ENCODE measurements at regions of chr10 and their contacts with region 1.

Region 1: GRCh38 chr10:103238506-103239252 is 7.0 kb upstream of the RPEL1 start:
- DNase-seq: peak in 1 of 2 experiments; percentile 39
- H3K4me3 ChIP-seq: no peak overlapping the region
- H3K27ac ChIP-seq: no peak overlapping the region
- H3K4me1 ChIP-seq: peaks cover 2 to 8% (median 6%) of the 10 kb centered on the region in 4 experiments; a peak in 6 of 7 replicates
- H3K27me3 ChIP-seq: no peaks in the 10 kb centered on the region
- CTCF ChIP-seq: peak; percentile 54 to 78 (median 65)
- EP300 ChIP-seq: no peak
- POLR2A ChIP-seq: no peak
- RAD21 ChIP-seq: peak; percentile 86

Region 2: DNA sequence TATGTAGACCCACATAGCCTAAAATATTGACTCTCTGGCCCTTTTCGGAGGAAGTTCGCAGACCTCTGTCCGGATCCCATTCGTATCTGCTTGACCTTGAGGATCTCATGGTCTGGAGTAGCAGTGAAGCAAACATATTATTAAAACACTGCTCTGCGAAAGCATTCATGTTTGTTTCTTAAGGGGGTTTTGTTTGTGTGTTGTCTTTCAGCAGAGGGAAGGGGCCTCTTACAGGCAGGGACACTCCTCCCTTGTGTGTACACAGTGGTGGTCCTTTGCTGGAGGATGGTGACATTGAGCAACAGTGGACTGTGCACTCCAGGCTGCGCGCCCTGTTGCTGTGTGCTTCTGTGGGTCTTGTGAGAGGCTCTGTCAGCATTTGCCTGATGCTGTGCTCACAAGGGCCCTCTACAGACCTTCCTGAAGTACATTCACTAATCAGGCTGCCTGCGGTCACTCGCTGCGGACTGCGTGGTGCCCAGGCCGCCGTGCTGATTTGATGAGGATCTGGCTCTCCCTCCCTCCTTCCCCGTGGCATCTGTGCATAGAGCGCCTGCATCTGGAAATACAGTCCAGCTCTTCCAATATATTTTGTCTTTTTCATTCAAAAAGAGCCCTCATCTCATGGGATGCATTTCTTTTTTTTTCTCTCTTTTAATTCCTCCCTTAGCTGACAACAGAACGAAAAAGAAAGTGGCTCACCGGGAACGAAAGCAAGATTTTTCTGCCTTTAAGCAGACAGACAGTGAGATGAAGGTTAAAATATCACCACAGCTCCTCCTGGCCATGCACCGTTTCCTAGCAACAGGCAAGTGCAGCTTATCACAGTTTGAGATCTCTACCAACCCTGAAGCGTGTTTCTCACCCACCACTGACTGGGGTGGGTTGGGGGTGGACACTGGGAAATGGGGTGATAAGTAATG is 184.8 kb before region 1 on chr10:
- CTCF ChIA-PET with region 1: no interaction called
- POLR2A ChIA-PET with region 1: no interaction called
- DNase-seq: peak; percentile 29 to 60
- H3K4me3 ChIP-seq: no peak overlapping the region
- H3K27ac ChIP-seq: no peak overlapping the region
- H3K4me1 ChIP-seq: no peaks in the 10 kb centered on the region
- H3K27me3 ChIP-seq: no peaks in the 10 kb centered on the region
- CTCF ChIP-seq: peak; percentile 37 to 70 (median 56); a peak in 3 of 4 replicates
- EP300 ChIP-seq: no peak
- POLR2A ChIP-seq: no peak
- RAD21 ChIP-seq: peak; percentile 62 to 63

Region 3: DNA sequence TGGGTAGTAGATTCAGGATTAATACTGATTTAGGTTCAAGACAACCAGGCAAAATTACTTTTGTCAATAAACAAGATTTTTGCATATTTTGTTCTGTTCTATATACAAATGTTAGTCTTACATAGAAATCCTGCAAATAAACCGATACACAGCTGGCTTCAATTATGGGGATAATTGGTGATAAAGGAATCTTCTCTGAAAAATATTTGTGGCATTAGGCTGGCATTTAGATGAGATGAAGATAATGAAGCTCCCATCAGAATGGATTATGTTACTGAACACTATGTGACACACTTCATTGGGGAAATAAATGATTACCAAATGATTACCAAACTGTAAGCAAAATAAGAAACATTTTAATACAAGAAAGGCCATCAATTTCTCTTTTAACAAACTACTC is 111.4 kb before region 1 on chr10:
- CTCF ChIA-PET with region 1: interaction called, 10 read pairs
- POLR2A ChIA-PET with region 1: no interaction called
- DNase-seq: no peak
- H3K4me3 ChIP-seq: no peak overlapping the region
- H3K27ac ChIP-seq: no peak overlapping the region
- H3K4me1 ChIP-seq: no peaks in the 10 kb centered on the region
- H3K27me3 ChIP-seq: no peaks in the 10 kb centered on the region
- CTCF ChIP-seq: no peak
- EP300 ChIP-seq: no peak
- POLR2A ChIP-seq: no peak
- RAD21 ChIP-seq: no peak

Region 4: GRCh38 chr10:103175580-103176285 is 62.9 kb before region 1 on chr10:
- CTCF ChIA-PET with region 1: interaction called, 11 read pairs
- POLR2A ChIA-PET with region 1: interaction called, 5 read pairs
- DNase-seq: peak in 1 of 2 experiments; percentile 47
- H3K4me3 ChIP-seq: no peak overlapping the region
- H3K27ac ChIP-seq: no peak overlapping the region
- H3K4me1 ChIP-seq: peaks cover 0 to 3% (median 1%) of the 10 kb centered on the region in 4 experiments; a peak in 1 of 7 replicates
- H3K27me3 ChIP-seq: no peaks in the 10 kb centered on the region
- CTCF ChIP-seq: no peak
- EP300 ChIP-seq: no peak
- POLR2A ChIP-seq: no peak
- RAD21 ChIP-seq: no peak; a peak in 1 of 4 replicates

Region 5: GRCh38 chr10:103192451-103193106 is 46.1 kb before region 1 on chr10:
- CTCF ChIA-PET with region 1: interaction called, 29 read pairs
- POLR2A ChIA-PET with region 1: interaction called, 15 read pairs
- DNase-seq: peak in 1 of 2 experiments; percentile 77
- H3K4me3 ChIP-seq: peak overlapping the region; percentile 86 to 90 (median 88)
- H3K27ac ChIP-seq: peak overlapping the region; percentile 76
- H3K4me1 ChIP-seq: peaks cover 4 to 9% (median 7%) of the 10 kb centered on the region in 4 experiments; a peak in 6 of 7 replicates
- H3K27me3 ChIP-seq: peaks cover 0 to 6% (median 1%) of the 10 kb centered on the region in 4 experiments; a peak in 4 of 7 replicates
- CTCF ChIP-seq: no peak
- EP300 ChIP-seq: no peak
- POLR2A ChIP-seq: no peak
- RAD21 ChIP-seq: no peak

Region 6: DNA sequence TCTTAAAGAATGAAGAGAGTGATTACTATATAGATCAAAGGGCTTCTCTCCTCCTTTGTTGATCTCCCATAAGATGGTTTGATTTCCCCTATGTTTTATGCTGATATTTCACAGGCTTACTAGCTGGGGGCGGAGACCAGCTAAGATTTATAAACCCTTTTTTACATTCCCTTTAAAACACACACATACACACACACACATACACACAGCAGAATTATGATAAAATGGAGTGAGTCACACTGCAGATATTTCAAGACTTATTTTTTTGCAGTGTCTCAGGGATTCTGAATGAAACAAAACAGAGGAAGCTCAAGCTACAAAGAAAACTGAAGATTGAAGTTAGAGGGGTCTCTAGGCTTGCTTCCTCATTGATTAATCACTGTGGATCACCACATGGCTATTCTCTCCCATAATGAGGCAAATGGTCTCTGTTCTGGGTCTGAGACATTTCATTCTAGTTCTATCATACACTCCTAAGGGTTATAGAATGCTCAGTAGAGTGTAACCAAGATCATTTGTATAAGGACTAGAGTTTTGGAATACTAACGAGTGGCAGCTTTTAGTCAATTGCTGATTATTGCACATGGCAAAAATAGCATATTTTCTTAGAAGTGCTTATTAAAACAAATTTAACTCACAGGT is 56.8 kb after region 1 on chr10:
- CTCF ChIA-PET with region 1: no interaction called
- POLR2A ChIA-PET with region 1: no interaction called
- DNase-seq: no peak
- H3K4me3 ChIP-seq: no peak overlapping the region
- H3K27ac ChIP-seq: no peak overlapping the region
- H3K4me1 ChIP-seq: no peaks in the 10 kb centered on the region
- H3K27me3 ChIP-seq: no peaks in the 10 kb centered on the region
- CTCF ChIP-seq: no peak
- EP300 ChIP-seq: no peak
- POLR2A ChIP-seq: no peak
- RAD21 ChIP-seq: no peak

Measured in H1 (cell line).